Panc1 (cell line): ENCODE measurements at regions of chr19 and their contacts with region 1.

Region 1: DNA sequence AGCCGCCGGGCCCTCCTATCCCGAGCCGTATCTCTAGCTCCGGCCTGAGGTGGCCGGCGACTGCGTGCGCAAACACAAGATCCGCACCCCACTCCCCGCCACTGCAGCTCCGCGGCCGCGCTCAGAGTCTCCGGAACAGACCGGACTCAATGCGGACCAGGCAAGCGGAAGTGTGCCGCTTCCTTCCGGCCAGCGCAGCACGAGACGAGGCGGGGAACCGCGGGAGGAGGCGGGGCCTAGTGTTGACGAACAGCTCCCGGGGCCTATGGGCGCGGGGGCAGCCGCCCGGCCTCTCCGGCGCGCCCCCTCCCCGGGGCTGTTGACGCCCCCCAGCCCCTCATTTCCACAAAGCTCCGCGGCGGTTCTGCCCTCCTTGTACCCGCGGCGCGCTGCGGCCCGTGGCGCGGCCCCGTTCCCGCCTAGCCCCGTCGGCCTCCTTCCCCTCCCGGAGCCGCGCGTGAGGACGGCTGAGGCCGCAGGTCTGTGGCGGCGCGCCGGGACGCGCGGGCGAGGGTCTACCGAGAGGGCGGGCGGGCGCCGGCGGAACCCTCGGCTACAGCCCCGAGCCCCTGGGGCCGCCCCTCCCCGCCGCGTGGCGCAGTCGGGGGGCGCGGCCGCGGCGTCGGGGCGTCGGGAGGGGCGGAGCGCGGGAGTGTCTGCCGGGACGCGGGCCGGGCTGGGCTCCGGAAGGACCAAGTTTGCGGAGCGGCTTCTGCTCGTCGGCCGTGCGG is at the start of gene DPY19L3:
- DNase-seq: peak; percentile 33
- ATAC-seq: peak; percentile 99
- H3K4me3 ChIP-seq: peak within 1 kb of the TSS; percentile 77 to 92
- H3K27ac ChIP-seq: peak within 1 kb of the TSS; percentile 95
- H3K4me1 ChIP-seq: peaks cover 23% of the 10 kb centered on the region
- H3K27me3 ChIP-seq: no peaks in the 10 kb centered on the region
- CTCF ChIP-seq: no peak
- total RNA-seq, gene DPY19L3: 27.8 TPM

Region 2: GRCh38 chr19:32387701-32388392 is 17.7 kb before region 1 on chr19:
- CTCF ChIA-PET with region 1: interaction called, 4 read pairs
- POLR2A ChIA-PET with region 1: interaction called, 10 read pairs
- in situ Hi-C with region 1: no loop called
- intact Hi-C with region 1: no loop called
- DNase-seq: no peak
- ATAC-seq: peak; percentile 48
- H3K4me3 ChIP-seq: no peak overlapping the region
- H3K27ac ChIP-seq: no peak overlapping the region; the same call in 1 of the 2 replicates
- H3K4me1 ChIP-seq: peaks cover 1% of the 10 kb centered on the region; the same call in 1 of the 2 replicates
- H3K27me3 ChIP-seq: no peaks in the 10 kb centered on the region
- CTCF ChIP-seq: no peak

Region 3: DNA sequence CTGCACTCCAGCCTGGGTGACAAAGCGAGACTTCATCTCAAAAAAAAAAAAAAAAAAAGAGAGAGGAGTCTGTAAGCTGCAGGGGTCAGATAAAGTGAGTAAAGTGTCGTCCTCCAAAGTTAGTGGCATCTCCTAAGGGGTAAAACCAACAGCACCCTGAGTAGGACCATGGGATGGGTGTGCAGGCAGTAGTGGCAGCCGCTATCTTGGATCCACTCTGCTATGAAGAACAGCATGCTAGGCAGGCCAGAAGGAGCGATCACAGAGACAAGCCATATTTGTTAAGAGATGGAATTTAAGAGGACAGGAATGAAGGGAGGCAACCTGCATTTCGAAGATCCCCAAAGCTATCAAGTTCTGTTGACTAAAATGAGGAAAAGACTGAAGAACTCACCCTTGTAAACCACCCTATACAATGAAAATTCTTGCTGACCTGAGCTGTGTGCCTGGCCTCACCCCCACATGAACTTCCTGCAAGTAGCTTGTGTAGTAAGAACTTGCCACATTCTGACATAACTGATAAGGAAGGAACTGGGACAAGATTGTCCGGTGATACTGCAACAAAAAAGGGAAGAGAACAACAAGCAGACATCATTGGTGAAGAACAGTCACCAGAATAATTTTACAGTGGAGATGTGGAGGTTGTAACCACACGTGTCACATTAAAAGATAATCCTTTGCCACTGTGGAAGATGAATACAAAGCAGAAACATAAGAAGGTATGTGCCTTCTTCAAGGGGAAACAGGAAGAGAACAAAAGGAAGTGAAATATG is 16.2 kb after region 1 on chr19:
- CTCF ChIA-PET with region 1: no interaction called
- POLR2A ChIA-PET with region 1: interaction called, 10 read pairs
- in situ Hi-C with region 1: no loop called
- intact Hi-C with region 1: no loop called
- DNase-seq: no peak
- ATAC-seq: no peak
- H3K4me3 ChIP-seq: no peak overlapping the region
- H3K27ac ChIP-seq: no peak overlapping the region
- H3K4me1 ChIP-seq: no peaks in the 10 kb centered on the region
- H3K27me3 ChIP-seq: no peaks in the 10 kb centered on the region
- CTCF ChIP-seq: no peak

Region 4: GRCh38 chr19:32450217-32450616 is 44.6 kb after region 1 on chr19:
- CTCF ChIA-PET with region 1: no interaction called
- POLR2A ChIA-PET with region 1: no interaction called
- in situ Hi-C with region 1: no loop called
- intact Hi-C with region 1: no loop called
- DNase-seq: no peak
- ATAC-seq: no peak
- H3K4me3 ChIP-seq: no peak overlapping the region
- H3K27ac ChIP-seq: no peak overlapping the region
- H3K4me1 ChIP-seq: no peaks in the 10 kb centered on the region
- H3K27me3 ChIP-seq: no peaks in the 10 kb centered on the region
- CTCF ChIP-seq: no peak

Region 5: DNA sequence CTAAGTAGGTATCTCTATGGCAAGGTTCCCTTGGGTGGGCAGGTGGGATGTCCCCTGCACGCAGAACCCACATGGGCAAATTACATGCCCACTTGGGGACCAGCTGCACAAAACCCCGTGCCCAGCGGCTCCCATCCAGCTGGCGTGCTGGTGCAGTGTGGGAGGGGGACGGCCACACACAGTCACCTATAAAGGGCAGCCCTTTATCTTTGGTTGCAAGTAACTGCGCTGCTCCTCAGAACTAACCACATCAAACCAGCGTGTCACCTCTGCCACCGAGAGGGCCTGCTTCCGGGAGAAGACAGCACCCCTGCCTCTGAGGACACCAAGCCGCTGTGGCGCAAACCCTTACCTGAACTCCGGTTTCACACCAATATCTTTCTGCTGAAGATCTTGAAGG is 237.2 kb after region 1 on chr19:
- CTCF ChIA-PET with region 1: no interaction called
- POLR2A ChIA-PET with region 1: interaction called, 11 read pairs
- in situ Hi-C with region 1: no loop called
- intact Hi-C with region 1: no loop called
- DNase-seq: no peak
- ATAC-seq: no peak
- H3K4me3 ChIP-seq: no peak overlapping the region
- H3K27ac ChIP-seq: no peak overlapping the region
- H3K4me1 ChIP-seq: no peaks in the 10 kb centered on the region
- H3K27me3 ChIP-seq: no peaks in the 10 kb centered on the region
- CTCF ChIP-seq: no peak